ENCODE measurements at regions of chr2 and their contacts with region 1.

Region 1: DNA sequence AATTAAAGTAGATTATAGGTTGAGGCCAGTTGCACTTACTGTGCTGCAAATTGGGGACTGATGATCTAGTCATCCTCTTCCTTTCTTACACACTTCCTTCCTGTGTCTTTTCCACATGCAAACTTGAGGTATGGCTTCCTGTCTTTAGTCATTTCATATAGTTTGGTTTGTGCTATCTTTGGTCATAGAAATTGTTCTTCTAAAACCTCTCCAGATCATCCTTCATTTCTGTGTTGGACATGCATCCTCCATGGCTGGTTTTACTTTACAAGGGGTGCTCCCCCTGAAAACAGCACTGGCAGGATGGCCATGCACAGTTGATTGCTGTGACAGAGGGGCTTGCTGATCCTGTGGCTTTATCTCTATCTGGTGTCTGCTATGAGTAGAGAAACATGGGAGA is 36.5 kb downstream of the MGAT5 start:
- DNase-seq: peak; percentile 77
- H3K4me3 Mint-ChIP-seq: no peak overlapping the region
- H3K27ac Mint-ChIP-seq: no peak overlapping the region
- H3K4me1 Mint-ChIP-seq: peaks cover 30% of the 10 kb centered on the region
- H3K27me3 Mint-ChIP-seq: no peaks in the 10 kb centered on the region

Region 2: DNA sequence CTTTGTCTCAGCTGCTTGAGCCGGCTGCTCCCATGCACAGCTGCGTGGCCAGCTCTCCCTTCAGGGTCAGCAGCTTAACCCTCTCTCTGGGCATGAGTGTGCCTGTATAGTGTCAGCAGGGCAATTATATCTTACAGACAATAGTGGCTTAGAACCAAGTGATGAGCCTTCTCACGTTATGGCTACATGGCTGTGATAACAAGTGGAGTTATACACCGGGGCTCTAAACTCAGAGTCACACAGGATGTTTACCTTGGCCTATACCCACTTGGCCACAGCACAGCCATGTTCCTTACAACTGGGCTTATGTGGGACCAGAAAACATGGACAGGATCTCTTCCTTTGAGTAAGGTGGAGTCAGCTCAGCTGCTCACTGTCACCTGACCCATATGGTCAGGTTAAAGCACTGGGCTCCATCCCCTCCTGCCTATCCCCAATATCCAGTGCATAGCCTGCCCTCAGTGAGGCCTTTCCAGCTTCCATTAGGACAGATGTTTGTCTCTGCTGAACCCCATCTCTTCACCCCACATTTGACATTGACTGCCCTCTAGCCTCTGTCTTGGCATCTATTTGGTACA is 427.9 kb before region 1 on chr2:
- intact Hi-C with region 1: no loop called
- DNase-seq: no peak
- H3K4me3 Mint-ChIP-seq: no peak overlapping the region
- H3K27ac Mint-ChIP-seq: no peak overlapping the region
- H3K4me1 Mint-ChIP-seq: no peaks in the 10 kb centered on the region
- H3K27me3 Mint-ChIP-seq: no peaks in the 10 kb centered on the region

Region 3: DNA sequence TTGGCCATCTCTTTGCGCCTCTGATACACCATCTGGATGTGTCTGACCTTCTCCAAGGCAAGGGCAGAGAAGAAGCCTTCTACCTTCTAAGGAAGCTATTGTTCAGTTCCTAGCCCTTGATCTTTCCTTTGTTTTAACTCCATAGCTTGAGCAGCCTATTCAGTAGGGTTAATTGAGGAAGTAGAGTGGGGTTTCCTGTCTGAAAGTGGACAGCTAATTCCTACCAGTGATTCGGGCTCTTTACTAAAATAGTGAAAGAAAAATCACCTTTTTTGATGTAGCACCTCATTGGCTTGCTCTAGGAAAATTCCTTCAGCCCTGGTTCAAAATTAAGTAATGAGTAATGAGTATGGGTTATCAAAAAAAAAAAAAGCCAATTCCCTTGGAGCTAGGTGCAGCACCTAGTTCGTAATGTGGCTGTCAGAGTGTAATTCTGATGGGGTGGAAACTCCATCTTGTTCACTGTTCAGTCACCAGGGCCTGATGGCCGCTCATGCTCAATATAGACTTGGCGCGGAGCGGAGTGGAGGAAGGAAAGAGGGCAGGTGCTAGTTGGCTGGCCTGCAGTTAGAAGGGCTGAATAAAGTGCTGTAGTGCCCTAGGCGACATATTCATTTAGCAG is 39.4 kb before region 1 on chr2:
- intact Hi-C with region 1: loop called (anchors 1 kb)
- DNase-seq: no peak
- H3K4me3 Mint-ChIP-seq: no peak overlapping the region
- H3K27ac Mint-ChIP-seq: peak overlapping the region; percentile 8
- H3K4me1 Mint-ChIP-seq: peaks cover 72% of the 10 kb centered on the region
- H3K27me3 Mint-ChIP-seq: peaks cover 10% of the 10 kb centered on the region

Region 4: GRCh38 chr2:134301099-134301927 is 11.0 kb after region 1 on chr2:
- intact Hi-C with region 1: loop called (anchors 1 kb)
- DNase-seq: no peak
- H3K4me3 Mint-ChIP-seq: no peak overlapping the region
- H3K27ac Mint-ChIP-seq: peak overlapping the region; percentile 8
- H3K4me1 Mint-ChIP-seq: peaks cover 25% of the 10 kb centered on the region
- H3K27me3 Mint-ChIP-seq: no peaks in the 10 kb centered on the region

Region 5: GRCh38 chr2:134314681-134315368 is 24.5 kb after region 1 on chr2:
- intact Hi-C with region 1: loop called (anchors 2 kb)
- DNase-seq: no peak
- H3K4me3 Mint-ChIP-seq: no peak overlapping the region
- H3K27ac Mint-ChIP-seq: no peak overlapping the region
- H3K4me1 Mint-ChIP-seq: peaks cover 22% of the 10 kb centered on the region
- H3K27me3 Mint-ChIP-seq: no peaks in the 10 kb centered on the region

Region 6: GRCh38 chr2:135664623-135665068 is 1374.3 kb after region 1 on chr2:
- intact Hi-C with region 1: no loop called
- DNase-seq: no peak
- H3K4me3 Mint-ChIP-seq: no peak overlapping the region
- H3K27ac Mint-ChIP-seq: peak overlapping the region; percentile 79
- H3K4me1 Mint-ChIP-seq: peaks cover 31% of the 10 kb centered on the region
- H3K27me3 Mint-ChIP-seq: no peaks in the 10 kb centered on the region

Region 7: DNA sequence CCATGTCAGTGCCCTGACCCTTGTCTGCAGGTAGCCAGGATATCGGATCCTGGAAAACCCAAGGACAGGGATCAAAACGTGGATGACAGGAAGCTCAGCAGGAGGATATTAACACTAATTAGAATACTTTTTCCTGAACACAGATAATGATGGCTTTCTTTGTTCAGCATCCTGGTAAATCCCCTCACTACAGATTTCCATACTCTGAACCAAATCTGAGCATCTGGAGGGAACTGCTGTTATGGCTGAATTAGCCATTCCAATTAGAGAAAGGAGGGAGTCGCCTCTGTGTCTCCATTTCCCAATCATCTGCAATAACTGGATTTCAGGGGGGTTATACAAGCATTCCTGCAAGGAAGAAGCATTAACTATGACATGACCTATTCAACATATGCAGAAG is 1803.2 kb after region 1 on chr2:
- intact Hi-C with region 1: no loop called
- DNase-seq: no peak
- H3K4me3 Mint-ChIP-seq: no peak overlapping the region
- H3K27ac Mint-ChIP-seq: no peak overlapping the region
- H3K4me1 Mint-ChIP-seq: peaks cover 25% of the 10 kb centered on the region
- H3K27me3 Mint-ChIP-seq: peaks cover 2% of the 10 kb centered on the region

Measured in activated CD4-positive, alpha-beta T cell treated with anti-CD3 and anti-CD28 coated beads, Interleukin-2, amount 10 ng/mL, durations not matched to agents 24 days and 14 days (primary cell).